AG04450 (cell line): ENCODE measurements at regions of chr4 and their contacts with region 1.

Region 1: GRCh38 chr4:158182736-158183135 is 9.9 kb upstream of the GASK1B start:
- DNase-seq: no peak
- H3K4me3 ChIP-seq: no peak overlapping the region
- H3K27ac ChIP-seq: no peak overlapping the region
- H3K27me3 ChIP-seq: no peaks in the 10 kb centered on the region
- CTCF ChIP-seq: no peak

Region 2: DNA sequence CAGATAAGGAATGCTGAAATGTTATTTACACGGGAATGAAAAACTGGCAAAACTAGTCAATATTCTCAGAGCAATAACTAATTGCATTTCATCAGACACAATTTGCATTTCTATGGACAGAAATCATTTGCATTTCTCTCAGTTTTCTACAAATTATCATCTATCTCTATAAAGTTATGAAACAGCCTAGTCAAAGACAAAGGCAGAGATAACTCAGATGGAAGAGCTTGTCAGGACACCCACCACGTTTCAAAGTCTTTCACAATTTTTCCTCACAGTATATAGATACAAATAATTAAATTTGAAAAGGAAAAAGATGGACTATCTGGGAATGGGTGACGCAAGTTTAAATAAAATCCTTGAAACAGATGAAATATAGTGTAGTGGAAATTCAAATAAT is 240.7 kb before region 1 on chr4:
- CTCF ChIA-PET with region 1: interaction called, 11 read pairs
- POLR2A ChIA-PET with region 1: no interaction called
- DNase-seq: no peak
- H3K4me3 ChIP-seq: no peak overlapping the region
- H3K27ac ChIP-seq: no peak overlapping the region
- H3K27me3 ChIP-seq: no peaks in the 10 kb centered on the region
- CTCF ChIP-seq: no peak

Region 3: GRCh38 chr4:158193171-158193749 is 10.5 kb after region 1 on chr4:
- CTCF ChIA-PET with region 1: interaction called, 37 read pairs
- POLR2A ChIA-PET with region 1: no interaction called
- DNase-seq: no peak
- H3K4me3 ChIP-seq: no peak overlapping the region
- H3K27ac ChIP-seq: no peak overlapping the region
- H3K27me3 ChIP-seq: peaks cover 2% of the 10 kb centered on the region
- CTCF ChIP-seq: peak; percentile 62